Posterior cingulate gyrus (tissue), 11 donors: ENCODE measurements at regions of chr19 and their contacts with region 1.

Region 1: GRCh38 chr19:45523642-45524256 is 16.5 kb downstream of the VASP start:
- DNase-seq: peak; percentile 63 to 96 (median 80)

Region 2: DNA sequence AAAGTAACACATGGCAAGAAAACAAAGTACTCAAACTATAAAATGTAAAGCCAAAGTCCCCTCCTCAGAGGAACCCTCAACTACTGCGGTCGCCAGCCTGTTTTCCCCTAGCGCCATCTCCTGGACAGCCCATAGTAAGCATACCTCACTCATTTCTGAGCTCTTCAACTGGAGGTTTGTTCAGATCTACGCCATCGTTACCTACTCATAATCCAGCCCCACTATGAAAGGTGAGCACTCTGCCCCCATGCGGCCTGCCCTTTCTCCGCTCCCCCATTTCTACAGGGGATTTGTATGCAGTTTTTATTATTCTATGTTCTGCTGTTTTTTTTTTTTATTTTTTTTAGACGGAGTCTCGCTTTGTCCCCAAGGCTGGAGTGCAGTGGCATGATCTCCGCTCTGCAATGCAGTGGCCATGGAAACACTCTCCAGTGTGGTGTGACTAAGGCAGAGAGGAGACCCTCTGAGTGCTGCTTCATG is 34.7 kb after region 1 on chr19:
- intact Hi-C with region 1: loop called (anchors 2 kb)
- DNase-seq: peak in 8 of 10 donors; percentile 24 to 88 (median 49)

Region 3: GRCh38 chr19:45643024-45643926 is 119.5 kb after region 1 on chr19:
- intact Hi-C with region 1: loop called (anchors 5 kb)
- DNase-seq: peak; percentile 84 to 98 (median 93)

Region 4: DNA sequence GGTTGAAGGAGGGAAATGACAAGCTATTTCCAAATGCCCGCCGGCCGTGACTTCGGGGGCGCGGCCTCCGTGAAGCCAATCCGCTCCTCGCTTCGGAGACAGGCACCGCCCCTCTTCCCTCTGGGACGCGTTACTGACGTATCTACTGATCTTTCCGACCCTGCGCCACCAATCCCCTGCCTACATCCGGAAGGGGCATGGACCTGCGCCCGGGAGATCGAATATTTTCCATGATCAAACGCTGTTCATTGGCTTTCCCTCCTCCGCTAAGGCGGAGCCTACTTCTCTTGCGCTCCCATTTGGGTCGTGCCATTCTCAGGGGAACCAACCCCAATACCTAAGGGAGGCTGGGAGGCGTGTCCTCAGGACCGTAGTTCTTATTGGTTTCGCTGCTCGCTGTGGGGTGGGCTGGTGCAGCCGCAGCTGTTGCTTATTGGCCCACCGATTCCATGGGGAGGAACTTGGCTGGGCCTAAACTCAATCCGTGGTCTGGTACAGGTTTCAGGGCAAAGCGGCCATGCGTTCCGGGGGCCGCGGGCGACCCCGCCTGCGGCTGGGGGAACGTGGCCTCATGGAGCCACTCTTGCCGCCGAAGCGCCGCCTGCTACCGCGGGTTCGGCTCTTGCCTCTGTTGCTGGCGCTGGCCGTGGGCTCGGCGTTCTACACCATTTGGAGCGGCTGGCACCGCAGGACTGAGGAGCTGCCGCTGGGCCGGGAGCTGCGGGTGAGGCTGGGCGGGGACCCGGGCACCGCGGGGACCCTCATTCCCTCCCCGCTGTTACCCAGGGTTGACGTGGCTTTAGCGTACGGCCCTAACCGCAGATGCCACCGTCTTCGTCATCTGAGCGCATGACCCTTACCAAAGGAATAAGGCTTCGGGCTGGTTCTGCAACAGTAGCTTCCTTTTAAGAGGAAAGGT is 168.7 kb after region 1 on chr19 and contains the start of gene QPCTL:
- intact Hi-C with region 1: loop called (anchors 5 kb)
- DNase-seq: peak; percentile 91 to 100 (median 98)